ENCODE measurements at regions of chr3 and their contacts with region 1.

Region 1: DNA sequence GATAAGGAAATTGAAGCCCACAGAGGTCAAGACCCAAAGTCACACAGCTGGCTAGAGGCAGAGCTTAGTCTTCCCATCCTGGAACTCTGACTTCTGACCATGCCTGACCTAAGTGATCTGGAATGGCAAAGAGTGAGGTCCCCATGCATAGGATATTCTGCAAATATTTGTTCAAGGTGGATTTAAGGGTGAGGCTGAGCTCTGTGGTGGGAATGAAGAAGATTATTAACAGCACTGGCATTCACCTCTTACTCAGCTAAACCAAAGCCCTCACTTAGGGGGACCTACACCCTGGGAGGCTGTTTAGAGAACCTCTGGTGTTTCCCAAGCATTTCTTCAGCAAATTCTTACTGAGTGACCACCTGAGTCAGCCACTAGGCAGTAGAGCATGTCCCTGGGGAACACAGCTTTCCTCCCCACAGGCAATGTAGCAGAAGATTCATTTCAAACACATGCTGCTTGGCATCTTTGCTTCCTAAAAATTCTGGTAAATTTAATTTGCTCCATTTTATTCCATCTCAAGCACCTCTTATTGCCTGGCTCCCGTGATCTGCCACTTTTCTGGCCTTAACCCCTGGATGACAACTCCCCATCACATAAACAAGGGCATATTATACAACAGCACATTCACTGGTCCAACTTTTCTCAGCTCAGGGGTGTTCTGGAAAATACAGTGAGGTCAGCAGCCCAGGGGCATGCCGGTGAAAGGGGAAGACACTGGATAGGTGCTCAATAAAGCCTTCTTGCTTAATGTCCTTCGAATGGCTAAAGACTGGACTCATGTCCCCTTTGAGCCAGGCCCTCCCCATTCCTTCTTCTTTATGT is 176.0 kb downstream of the ABHD5 start:
- DNase-seq: no peak
- ATAC-seq: no peak
- H3K4me3 ChIP-seq: no peak overlapping the region
- H3K27ac ChIP-seq: no peak overlapping the region
- H3K4me1 ChIP-seq: peaks cover 0 to 3% (median 0%) of the 10 kb centered on the region in 9 donors
- H3K27me3 ChIP-seq: peaks cover 0 to 21% (median 0%) of the 10 kb centered on the region in 7 donors
- CTCF ChIP-seq: no peak

Region 2: GRCh38 chr3:42298259-42298658 is 1568.5 kb before region 1 on chr3:
- intact Hi-C with region 1: loop called in 1 of 10 experiments (anchors 5 kb)
- DNase-seq: no peak
- ATAC-seq: no peak
- H3K4me3 ChIP-seq: no peak overlapping the region
- H3K27ac ChIP-seq: no peak overlapping the region
- H3K4me1 ChIP-seq: no peaks in the 10 kb centered on the region
- H3K27me3 ChIP-seq: peaks cover 0 to 15% (median 8%) of the 10 kb centered on the region in 7 donors
- CTCF ChIP-seq: no peak

Region 3: GRCh38 chr3:44179246-44179645 is 312.5 kb after region 1 on chr3:
- intact Hi-C with region 1: loop called in 1 of 10 experiments (anchors 10 kb)
- DNase-seq: no peak
- ATAC-seq: no peak
- H3K4me3 ChIP-seq: no peak overlapping the region
- H3K27ac ChIP-seq: no peak overlapping the region
- H3K4me1 ChIP-seq: peaks cover 0 to 3% (median 0%) of the 10 kb centered on the region in 9 donors
- H3K27me3 ChIP-seq: peaks cover 0 to 17% (median 4%) of the 10 kb centered on the region in 7 donors
- CTCF ChIP-seq: no peak

Measured in heart right ventricle (tissue), 16 donors.